GM23248 (cell line): ENCODE measurements at regions of chr6 and their contacts with region 1.

Region 1: DNA sequence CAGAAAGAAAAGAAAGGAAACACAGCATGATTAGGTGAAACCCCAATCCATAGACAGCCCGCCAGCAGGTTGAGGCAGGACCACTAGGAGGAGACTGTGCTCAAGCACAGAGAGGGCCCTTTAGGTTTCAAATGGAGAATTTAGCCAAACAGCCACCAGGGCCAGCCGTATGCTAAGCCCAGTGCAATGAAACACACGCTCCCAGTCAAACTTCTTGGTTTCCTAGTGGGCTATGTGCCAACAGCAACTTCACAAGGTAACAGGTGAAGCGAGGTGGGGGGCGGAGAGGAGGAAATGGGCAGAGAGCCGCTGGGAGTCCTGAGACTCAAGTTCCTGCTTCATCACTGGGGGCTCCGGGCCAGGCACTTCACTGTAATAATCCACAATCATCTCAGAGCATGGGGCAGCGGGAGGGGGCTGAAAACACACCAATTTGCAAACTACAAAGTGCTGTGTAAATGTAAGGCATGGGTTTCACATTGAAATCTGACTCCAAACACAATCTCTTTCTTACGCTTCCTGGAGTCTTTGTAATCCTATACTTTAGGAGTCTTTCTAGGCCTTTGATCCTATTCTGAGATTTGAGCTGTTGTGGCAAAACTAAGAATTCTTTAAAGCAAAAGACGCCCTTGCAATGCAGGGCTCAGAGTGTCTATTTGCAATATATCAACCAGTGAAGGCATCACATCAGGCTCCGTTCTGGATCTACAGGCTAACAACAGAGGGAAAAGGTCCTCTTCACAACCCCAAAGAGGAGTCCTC is 117.3 kb downstream of the OPRM1 start:
- DNase-seq: peak; percentile 53
- H3K4me3 ChIP-seq: no peak overlapping the region
- H3K27ac ChIP-seq: no peak overlapping the region
- H3K4me1 ChIP-seq: no peaks in the 10 kb centered on the region
- H3K27me3 ChIP-seq: no peaks in the 10 kb centered on the region

Region 2: GRCh38 chr6:154343473-154344308 is 187.4 kb after region 1 on chr6:
- in situ Hi-C with region 1: loop called (anchors 10 kb)
- DNase-seq: peak; percentile 79
- H3K4me3 ChIP-seq: no peak overlapping the region
- H3K27ac ChIP-seq: no peak overlapping the region
- H3K4me1 ChIP-seq: no peaks in the 10 kb centered on the region
- H3K27me3 ChIP-seq: 0 out of 2 replicates have a peak, but pooled peaks cover 8% of the 10 kb centered on the region

Region 3: DNA sequence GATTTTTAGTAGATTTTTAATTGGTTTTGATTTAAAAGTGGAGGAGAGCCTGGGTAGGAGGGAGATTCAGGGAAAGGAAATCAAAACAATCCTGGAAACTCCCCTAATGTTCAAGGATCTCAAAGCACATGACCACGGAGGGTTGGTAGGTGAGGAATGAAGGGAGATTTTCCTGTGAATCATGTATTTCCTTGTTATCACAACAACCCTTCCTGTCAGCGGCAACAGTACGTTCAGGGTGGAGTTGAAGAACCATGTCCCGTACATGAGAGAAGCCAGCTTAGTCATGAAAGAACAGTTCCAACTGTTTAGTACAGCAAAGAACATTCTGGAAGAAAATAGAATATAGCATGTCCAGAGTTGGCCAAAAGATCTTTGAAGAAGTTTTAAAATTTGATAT is 497.5 kb after region 1 on chr6:
- in situ Hi-C with region 1: loop called (anchors 25 kb)
- DNase-seq: peak; percentile 76
- H3K4me3 ChIP-seq: no peak overlapping the region; the same call in 1 of the 2 replicates
- H3K27ac ChIP-seq: peak overlapping the region; percentile 5; the same call in 1 of the 2 replicates
- H3K4me1 ChIP-seq: no peaks in the 10 kb centered on the region
- H3K27me3 ChIP-seq: no peaks in the 10 kb centered on the region

Region 4: DNA sequence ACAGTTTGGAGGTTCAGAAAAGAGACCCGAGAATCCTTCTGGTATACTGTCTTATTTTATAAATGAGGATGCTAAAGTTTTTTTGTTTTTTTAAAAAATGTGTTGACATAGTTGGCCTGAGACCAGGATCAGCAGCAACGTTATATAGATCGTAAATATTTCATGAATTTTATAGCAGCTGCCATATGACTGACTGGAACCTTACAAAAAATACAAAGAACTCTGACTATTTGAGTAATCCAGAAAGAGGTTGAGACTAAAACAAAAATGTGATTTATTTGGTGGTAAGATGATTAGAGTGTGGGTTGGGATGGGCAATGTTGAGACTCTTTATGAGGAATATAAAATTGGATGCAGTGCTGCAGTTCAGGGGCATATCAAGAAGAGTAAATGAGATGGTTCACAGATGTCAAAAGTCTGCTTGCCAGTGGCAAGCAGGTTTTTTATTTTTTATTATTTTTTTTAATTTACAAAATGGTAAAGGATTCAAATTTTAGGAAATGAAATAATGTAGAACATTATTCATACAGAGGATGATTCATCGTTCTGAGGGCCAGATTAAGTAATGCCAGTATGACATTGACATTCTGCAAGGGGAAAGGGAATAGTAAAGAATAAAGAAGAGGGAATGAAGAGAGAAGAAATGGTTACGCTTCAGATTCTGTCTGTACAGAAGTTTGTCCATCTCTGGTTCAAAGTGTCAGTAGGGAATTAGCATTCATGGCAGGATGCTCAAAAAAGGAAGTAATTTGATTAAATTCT is 635.4 kb after region 1 on chr6:
- in situ Hi-C with region 1: loop called (anchors 25 kb)
- DNase-seq: peak; percentile 61
- H3K4me3 ChIP-seq: no peak overlapping the region
- H3K27ac ChIP-seq: no peak overlapping the region
- H3K4me1 ChIP-seq: peaks cover 17% of the 10 kb centered on the region
- H3K27me3 ChIP-seq: no peaks in the 10 kb centered on the region